Activated CD4-positive, alpha-beta T cell treated with anti-CD3 and anti-CD28 coated beads for 36 hours (primary cell): ENCODE measurements at regions of chr14 and their contacts with region 1.

Region 1: GRCh38 chr14:23294734-23295561 is 7.7 kb downstream of the PPP1R3E start:
- DNase-seq: peak; percentile 68
- ATAC-seq: peak; percentile 91
- H3K4me3 Mint-ChIP-seq: peak overlapping the region; percentile 7
- H3K27ac Mint-ChIP-seq: peak overlapping the region; percentile 47
- H3K4me1 Mint-ChIP-seq: peaks cover 20% of the 10 kb centered on the region
- H3K27me3 Mint-ChIP-seq: no peaks in the 10 kb centered on the region

Region 2: GRCh38 chr14:23259426-23259825 is 35.5 kb before region 1 on chr14:
- CTCF ChIA-PET with region 1: interaction called, 4 read pairs
- POLR2A ChIA-PET with region 1: no interaction called
- intact Hi-C with region 1: loop called in 1 of 2 experiments (anchors 2 kb)
- DNase-seq: no peak
- ATAC-seq: no peak
- H3K4me3 Mint-ChIP-seq: no peak overlapping the region
- H3K27ac Mint-ChIP-seq: no peak overlapping the region
- H3K4me1 Mint-ChIP-seq: no peaks in the 10 kb centered on the region
- H3K27me3 Mint-ChIP-seq: peaks cover 23% of the 10 kb centered on the region

Region 3: DNA sequence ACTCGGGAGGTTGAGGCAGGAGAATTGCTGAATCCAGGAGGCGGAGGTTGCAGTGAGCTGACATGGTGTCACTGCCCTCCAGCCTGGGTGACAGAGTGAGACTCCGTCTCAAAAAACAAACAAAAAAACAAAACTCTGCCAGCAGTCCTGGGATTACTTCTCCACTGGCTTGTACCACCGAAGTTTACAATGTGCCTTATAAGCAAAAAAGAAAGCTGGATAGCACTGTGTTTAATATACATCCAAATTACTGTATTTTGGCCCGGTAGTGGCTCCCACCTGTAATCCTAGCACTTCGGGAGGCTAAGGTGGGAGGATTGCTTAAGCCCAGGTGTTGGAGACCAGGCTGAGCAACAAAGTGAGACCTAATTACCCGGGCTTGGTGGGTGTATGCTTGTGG is 25.8 kb before region 1 on chr14:
- CTCF ChIA-PET with region 1: interaction called, 5 read pairs
- POLR2A ChIA-PET with region 1: no interaction called
- intact Hi-C with region 1: loop called (anchors 1 to 2 kb)
- DNase-seq: no peak
- ATAC-seq: no peak
- H3K4me3 Mint-ChIP-seq: no peak overlapping the region
- H3K27ac Mint-ChIP-seq: no peak overlapping the region
- H3K4me1 Mint-ChIP-seq: no peaks in the 10 kb centered on the region
- H3K27me3 Mint-ChIP-seq: peaks cover 5% of the 10 kb centered on the region